Right cardiac atrium (tissue), 5 donors: ENCODE measurements at regions of chr12 and their contacts with region 1.

Region 1: GRCh38 chr12:79690638-79691493 is at the start of gene PAWR:
- DNase-seq: peak; percentile 53 to 83 (median 83)
- ATAC-seq: peak; percentile 78 to 84
- H3K4me3 ChIP-seq: peak within 1 kb of the TSS; percentile 84
- H3K27ac ChIP-seq: peak within 1 kb of the TSS; percentile 38
- H3K4me1 ChIP-seq: no peaks in the 10 kb centered on the region
- H3K27me3 ChIP-seq: no peaks in the 10 kb centered on the region
- total RNA-seq, gene PAWR: 14.1 to 18.7 (median 16.4) TPM

Region 2: GRCh38 chr12:79560225-79560889 is 130.5 kb before region 1 on chr12:
- intact Hi-C with region 1: loop called in 1 of 4 experiments (anchors 5 kb)
- DNase-seq: no peak
- ATAC-seq: no peak
- H3K4me3 ChIP-seq: no peak overlapping the region
- H3K27ac ChIP-seq: no peak overlapping the region
- H3K4me1 ChIP-seq: no peaks in the 10 kb centered on the region
- H3K27me3 ChIP-seq: no peaks in the 10 kb centered on the region

Region 3: DNA sequence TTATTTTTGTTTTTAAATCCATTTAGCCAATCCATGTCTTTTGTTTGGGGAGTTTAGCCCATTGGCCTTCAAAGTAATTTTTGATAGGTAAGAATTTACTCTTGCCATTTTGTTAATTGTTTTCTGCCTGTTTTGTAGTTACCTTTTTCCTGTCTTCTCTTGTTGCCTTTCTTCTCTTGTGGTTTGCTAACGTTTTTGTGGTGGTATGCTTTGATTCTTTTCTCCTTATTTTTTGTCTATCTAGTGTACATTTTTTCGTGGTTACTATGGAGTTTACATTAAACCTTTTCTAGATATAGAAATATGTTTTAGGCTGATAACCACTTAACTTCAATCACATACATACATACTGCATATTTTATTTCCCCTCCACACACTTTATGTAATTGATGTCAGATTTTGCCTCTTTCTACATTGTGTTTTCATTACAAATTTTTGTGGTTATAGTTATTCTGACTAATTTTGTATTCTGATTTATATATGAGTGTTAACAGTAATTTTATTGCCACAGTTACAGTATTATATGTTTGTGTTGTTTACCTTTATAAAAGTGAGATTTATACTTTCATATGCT is 263.3 kb after region 1 on chr12:
- intact Hi-C with region 1: no loop called
- DNase-seq: no peak
- ATAC-seq: no peak
- H3K4me3 ChIP-seq: no peak overlapping the region
- H3K27ac ChIP-seq: no peak overlapping the region
- H3K4me1 ChIP-seq: no peaks in the 10 kb centered on the region
- H3K27me3 ChIP-seq: no peaks in the 10 kb centered on the region